Heart left ventricle (tissue), 16 donors: ENCODE measurements at regions of chr7 and their contacts with region 1.

Region 1: DNA sequence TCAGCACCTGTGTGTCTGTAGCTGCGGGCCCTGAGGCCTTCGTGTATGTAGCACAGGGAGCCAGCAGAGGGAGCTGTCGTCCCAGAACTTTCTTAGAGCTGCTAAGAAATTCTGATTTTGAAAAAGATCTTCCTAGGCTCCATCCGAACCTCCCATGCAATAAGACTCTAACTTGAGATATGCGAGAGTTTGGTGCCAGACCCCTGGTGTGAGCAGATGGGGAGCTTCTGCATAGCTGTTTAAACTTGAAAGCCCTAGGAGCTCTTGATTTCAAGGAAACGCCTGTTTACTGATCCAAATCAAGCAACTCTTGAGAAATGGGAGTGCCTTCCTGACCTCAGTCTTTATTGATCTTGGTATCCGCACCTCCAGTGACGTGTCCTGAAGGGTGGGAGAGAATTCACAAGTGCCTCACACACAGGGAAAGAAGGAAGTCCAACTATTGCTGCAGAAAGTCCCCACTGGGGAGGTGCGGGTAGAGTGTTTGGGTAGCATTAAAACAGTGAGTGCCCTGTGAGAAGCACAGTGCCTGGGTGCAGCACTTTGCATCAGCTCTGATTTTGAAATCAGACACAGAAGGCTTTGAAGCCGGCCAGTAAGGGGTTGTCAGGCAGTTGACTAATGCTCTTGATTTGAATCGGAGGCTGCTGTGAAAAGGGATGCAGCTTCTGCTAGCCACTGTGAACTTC is 66.4 kb upstream of the STRIP2 start:
- DNase-seq: peak; percentile 54 to 78 (median 73)
- ATAC-seq: peak; percentile 62 to 88 (median 88)
- H3K4me3 ChIP-seq: peak overlapping the region in 6 of 12 donors; percentile 6 to 25 (median 18)
- H3K27ac ChIP-seq: no peak overlapping the region
- H3K4me1 ChIP-seq: peaks cover 0 to 14% (median 5%) of the 10 kb centered on the region in 12 donors
- H3K27me3 ChIP-seq: no peaks in the 10 kb centered on the region
- CTCF ChIP-seq: peak; percentile 78 to 94 (median 86)
- POLR2A ChIP-seq: no peak

Region 2: DNA sequence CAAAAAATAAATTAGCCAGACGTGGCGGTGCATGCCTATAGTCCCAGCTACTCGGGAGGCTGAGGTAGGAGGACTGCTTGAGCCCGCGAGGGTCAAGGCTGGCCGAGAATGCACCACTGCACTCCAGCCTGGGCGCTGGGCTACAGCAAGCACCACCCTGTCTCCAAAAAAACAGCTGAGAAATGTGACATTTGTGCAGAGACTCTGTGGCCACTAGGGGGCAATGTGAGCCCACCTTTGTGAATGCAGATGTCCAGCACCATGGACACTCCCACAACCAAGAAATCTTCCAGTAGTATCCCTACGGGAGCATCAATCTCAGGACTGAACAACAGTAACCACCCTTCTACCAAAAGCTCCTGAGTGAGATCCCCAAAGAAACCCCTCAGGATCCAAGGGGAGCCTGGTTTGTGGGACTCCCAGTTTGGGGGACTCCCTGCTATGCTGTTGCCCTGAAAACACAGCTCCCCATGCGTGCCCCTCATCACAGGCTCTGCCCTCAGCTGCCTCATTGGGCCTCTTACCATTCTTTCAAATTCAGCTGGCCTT is 149.3 kb before region 1 on chr7:
- intact Hi-C with region 1: loop called in 1 of 10 experiments (anchors 10 kb)
- DNase-seq: peak; percentile 81 to 92 (median 84)
- ATAC-seq: peak; percentile 81 to 92 (median 90)
- H3K4me3 ChIP-seq: no peak overlapping the region
- H3K27ac ChIP-seq: no peak overlapping the region
- H3K4me1 ChIP-seq: peaks cover 0 to 16% (median 0%) of the 10 kb centered on the region in 12 donors
- H3K27me3 ChIP-seq: peaks cover 0 to 6% (median 0%) of the 10 kb centered on the region in 9 donors
- CTCF ChIP-seq: peak; percentile 81 to 96 (median 92)
- POLR2A ChIP-seq: no peak

Region 3: GRCh38 chr7:129343099-129343700 is 24.6 kb before region 1 on chr7:
- intact Hi-C with region 1: no loop called
- DNase-seq: no peak
- ATAC-seq: no peak
- H3K4me3 ChIP-seq: no peak overlapping the region
- H3K27ac ChIP-seq: no peak overlapping the region
- H3K4me1 ChIP-seq: no peaks in the 10 kb centered on the region
- H3K27me3 ChIP-seq: no peaks in the 10 kb centered on the region
- CTCF ChIP-seq: peak; percentile 52 to 79 (median 66)
- POLR2A ChIP-seq: no peak

Region 4: GRCh38 chr7:129635300-129636029 is 267.6 kb after region 1 on chr7:
- intact Hi-C with region 1: loop called in 8 of 10 experiments (anchors 5 to 10 kb)
- DNase-seq: peak in 4 of 5 donors; percentile 43 to 62 (median 44)
- ATAC-seq: peak; percentile 69 to 87 (median 77)
- H3K4me3 ChIP-seq: no peak overlapping the region
- H3K27ac ChIP-seq: no peak overlapping the region
- H3K4me1 ChIP-seq: peaks cover 0 to 27% (median 5%) of the 10 kb centered on the region in 12 donors
- H3K27me3 ChIP-seq: no peaks in the 10 kb centered on the region
- CTCF ChIP-seq: peak; percentile 50 to 81 (median 74)
- POLR2A ChIP-seq: no peak